MCF 10A (cell line): ENCODE measurements at regions of chr18 and their contacts with region 1.

Region 1: DNA sequence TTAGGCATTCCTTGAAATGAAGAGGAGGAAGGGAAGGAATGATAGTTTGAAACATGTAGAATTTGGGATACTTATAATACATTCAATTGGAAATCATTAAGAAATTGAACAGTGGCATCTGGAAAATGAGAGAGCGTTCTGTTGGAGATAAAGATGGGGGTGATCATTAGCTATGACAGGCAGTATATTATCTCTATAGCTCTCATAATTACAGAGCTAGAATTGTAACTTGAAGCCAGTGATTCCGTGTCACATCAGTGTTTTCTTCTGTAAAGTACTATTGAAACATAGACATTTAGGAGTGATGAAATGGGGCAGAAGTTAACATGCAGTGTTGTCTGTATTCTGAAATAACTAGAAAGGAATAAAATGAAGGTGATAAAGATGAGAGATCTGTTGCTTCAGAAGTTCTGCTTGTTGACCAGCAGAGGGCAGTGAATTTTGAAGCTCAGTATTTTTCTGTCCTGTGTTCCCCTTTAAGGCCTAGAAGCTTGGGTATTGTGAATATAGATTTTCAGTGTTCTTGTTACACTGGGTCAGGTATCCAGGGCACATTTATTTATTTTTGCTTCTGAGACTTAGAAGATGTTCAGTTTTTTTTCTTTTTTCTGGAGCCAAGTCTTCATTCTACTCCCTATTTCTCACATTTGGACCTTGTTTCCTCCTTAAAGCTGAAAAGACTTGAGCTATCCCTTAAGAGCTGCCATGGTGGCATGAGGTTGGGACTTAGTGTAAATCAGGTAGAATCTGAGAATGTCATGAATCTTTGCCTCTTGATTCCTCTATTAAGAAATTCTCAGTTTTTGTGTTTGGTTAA is 157.4 kb downstream of the TAF4B start:
- DNase-seq: peak; percentile 65
- H3K4me3 Mint-ChIP-seq: no peak overlapping the region
- H3K27ac Mint-ChIP-seq: no peak overlapping the region
- H3K4me1 Mint-ChIP-seq: peaks cover 8% of the 10 kb centered on the region
- H3K27me3 Mint-ChIP-seq: no peaks in the 10 kb centered on the region
- CTCF ChIP-seq: peak; percentile 69

Region 2: GRCh38 chr18:25675123-25675850 is 708.4 kb before region 1 on chr18:
- CTCF ChIA-PET with region 1: no interaction called
- POLR2A ChIA-PET with region 1: no interaction called
- intact Hi-C with region 1: no loop called
- DNase-seq: no peak
- H3K4me3 Mint-ChIP-seq: no peak overlapping the region
- H3K27ac Mint-ChIP-seq: no peak overlapping the region
- H3K4me1 Mint-ChIP-seq: no peaks in the 10 kb centered on the region
- H3K27me3 Mint-ChIP-seq: no peaks in the 10 kb centered on the region
- CTCF ChIP-seq: no peak

Region 3: DNA sequence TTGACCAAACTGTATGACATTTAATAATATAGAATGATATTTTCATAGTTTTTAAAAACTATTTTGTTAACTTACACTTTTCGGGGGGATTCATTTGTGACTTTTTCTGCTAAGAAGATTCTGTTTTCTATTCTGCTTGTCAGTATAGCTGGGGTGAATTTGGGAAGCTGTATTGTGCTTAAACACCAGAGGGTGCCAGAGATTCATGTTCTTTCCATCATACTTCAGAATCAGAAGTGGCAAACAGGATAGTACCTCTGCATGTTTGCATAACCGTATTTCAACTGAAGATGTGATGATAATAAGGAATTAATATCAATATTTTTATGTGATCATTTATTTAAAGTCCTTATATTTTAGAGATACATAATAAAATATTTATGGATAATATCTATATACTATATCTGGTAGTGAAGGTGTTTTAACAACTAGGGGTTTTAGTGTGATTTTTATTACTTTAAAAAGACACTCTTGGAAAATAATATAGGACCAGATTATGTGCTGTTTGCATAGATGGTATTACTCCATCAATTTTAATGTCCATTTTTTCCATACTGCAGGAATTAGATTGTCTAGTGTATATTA is 76.4 kb before region 1 on chr18:
- CTCF ChIA-PET with region 1: interaction called, 16 read pairs
- POLR2A ChIA-PET with region 1: interaction called, 5 read pairs
- intact Hi-C with region 1: loop called (anchors 2 kb)
- DNase-seq: peak; percentile 65
- H3K4me3 Mint-ChIP-seq: no peak overlapping the region
- H3K27ac Mint-ChIP-seq: no peak overlapping the region
- H3K4me1 Mint-ChIP-seq: no peaks in the 10 kb centered on the region
- H3K27me3 Mint-ChIP-seq: no peaks in the 10 kb centered on the region
- CTCF ChIP-seq: peak; percentile 59

Region 4: DNA sequence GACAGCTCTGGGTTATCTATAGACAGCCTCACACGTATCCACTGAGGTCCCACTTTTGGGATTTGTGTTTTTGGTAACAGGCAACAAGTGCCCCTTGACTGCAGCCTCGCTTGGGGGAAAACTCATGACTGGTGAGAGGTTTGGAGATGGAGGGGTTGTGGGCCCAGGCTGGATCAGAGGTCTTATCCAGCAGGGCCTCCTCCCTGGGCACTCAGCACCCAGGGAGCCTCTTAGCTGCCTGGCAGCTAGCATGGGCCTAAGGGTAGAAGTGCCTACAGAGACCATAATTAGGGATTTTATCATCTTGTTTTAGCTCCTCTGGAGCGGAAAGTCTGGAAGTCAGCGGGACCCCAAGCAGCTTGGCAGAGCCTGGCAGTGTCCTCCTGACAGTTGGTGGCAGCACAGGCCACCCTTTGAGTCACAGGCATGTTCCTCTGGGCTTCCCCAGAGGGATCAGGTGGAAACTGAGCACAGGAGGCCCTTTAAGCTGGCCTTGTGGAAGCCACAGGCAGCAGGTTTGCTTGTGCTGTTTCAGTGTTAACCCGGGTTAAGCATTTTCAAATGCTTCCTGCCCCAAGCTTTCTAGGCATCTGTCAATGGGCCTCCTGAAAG is 21.6 kb after region 1 on chr18:
- CTCF ChIA-PET with region 1: interaction called, 14 read pairs
- POLR2A ChIA-PET with region 1: no interaction called
- intact Hi-C with region 1: no loop called
- DNase-seq: peak; percentile 64
- H3K4me3 Mint-ChIP-seq: no peak overlapping the region
- H3K27ac Mint-ChIP-seq: no peak overlapping the region
- H3K4me1 Mint-ChIP-seq: peaks cover 11% of the 10 kb centered on the region
- H3K27me3 Mint-ChIP-seq: no peaks in the 10 kb centered on the region
- CTCF ChIP-seq: peak; percentile 57

Region 5: DNA sequence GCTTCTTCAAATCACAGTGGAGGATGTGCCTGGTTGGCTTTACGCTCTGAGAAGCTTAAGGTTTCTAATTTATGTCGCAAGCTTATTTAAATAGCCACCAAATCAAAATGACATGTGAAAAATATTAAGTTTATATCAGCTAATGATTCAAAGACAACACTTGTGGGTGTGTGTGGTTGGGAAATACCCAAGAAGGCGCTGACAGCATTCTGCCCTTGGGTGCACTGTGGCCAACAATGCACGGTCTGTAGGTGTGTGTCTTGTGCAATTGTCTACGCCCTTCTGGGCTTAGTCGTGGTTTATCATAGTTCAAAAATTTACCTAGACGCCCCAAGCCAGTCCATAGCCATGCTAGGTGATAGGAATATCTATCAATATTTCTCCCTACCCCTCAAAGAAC is 103.8 kb after region 1 on chr18:
- CTCF ChIA-PET with region 1: interaction called, 14 read pairs
- POLR2A ChIA-PET with region 1: interaction called, 4 read pairs
- intact Hi-C with region 1: no loop called
- DNase-seq: peak; percentile 92
- H3K4me3 Mint-ChIP-seq: no peak overlapping the region
- H3K27ac Mint-ChIP-seq: peak overlapping the region; percentile 83
- H3K4me1 Mint-ChIP-seq: peaks cover 34% of the 10 kb centered on the region
- H3K27me3 Mint-ChIP-seq: no peaks in the 10 kb centered on the region
- CTCF ChIP-seq: no peak

Region 6: GRCh38 chr18:26650310-26651268 is 266.9 kb after region 1 on chr18:
- CTCF ChIA-PET with region 1: interaction called, 10 read pairs
- POLR2A ChIA-PET with region 1: no interaction called
- intact Hi-C with region 1: loop called (anchors 1 kb)
- DNase-seq: no peak
- H3K4me3 Mint-ChIP-seq: no peak overlapping the region
- H3K27ac Mint-ChIP-seq: no peak overlapping the region
- H3K4me1 Mint-ChIP-seq: peaks cover 5% of the 10 kb centered on the region
- H3K27me3 Mint-ChIP-seq: peaks cover 15% of the 10 kb centered on the region
- CTCF ChIP-seq: no peak

Region 7: DNA sequence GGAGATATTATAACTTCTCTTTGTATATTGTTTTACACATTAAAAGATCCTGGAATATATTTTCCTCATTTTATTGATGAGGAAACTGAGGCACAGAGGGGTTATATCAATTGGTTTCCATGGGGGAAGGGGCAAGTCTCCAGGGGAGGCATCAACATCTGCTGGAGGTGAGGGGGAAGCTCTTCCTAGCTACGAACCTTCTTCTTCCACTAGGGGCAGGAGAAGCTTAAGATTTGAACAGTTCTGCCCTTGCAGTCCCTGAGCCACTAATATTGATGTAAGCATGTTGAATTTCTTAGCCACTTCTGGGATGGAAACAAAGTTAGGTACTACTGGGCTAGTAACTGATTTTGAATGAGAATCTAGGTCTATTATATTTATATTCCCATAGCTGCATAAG is 621.9 kb after region 1 on chr18:
- CTCF ChIA-PET with region 1: interaction called, 6 read pairs
- POLR2A ChIA-PET with region 1: no interaction called
- intact Hi-C with region 1: loop called (anchors 1 kb)
- DNase-seq: peak; percentile 35
- H3K4me3 Mint-ChIP-seq: no peak overlapping the region
- H3K27ac Mint-ChIP-seq: no peak overlapping the region
- H3K4me1 Mint-ChIP-seq: no peaks in the 10 kb centered on the region
- H3K27me3 Mint-ChIP-seq: peaks cover 12% of the 10 kb centered on the region
- CTCF ChIP-seq: peak; percentile 28